Calu3 (cell line): ENCODE measurements at regions of chr12 and their contacts with region 1.

Region 1: GRCh38 chr12:121060149-121061001 is 21.3 kb upstream of the OASL start:
- DNase-seq: peak; percentile 49
- H3K4me3 Mint-ChIP-seq: peak overlapping the region; percentile 43
- H3K27ac Mint-ChIP-seq: peak overlapping the region; percentile 60
- H3K4me1 Mint-ChIP-seq: peaks cover 7% of the 10 kb centered on the region
- H3K27me3 Mint-ChIP-seq: no peaks in the 10 kb centered on the region
- CTCF ChIP-seq: peak; percentile 41

Region 2: GRCh38 chr12:121095544-121096198 is 35.3 kb after region 1 on chr12:
- CTCF ChIA-PET with region 1: no interaction called
- intact Hi-C with region 1: loop called (anchors 5 kb)
- DNase-seq: peak; percentile 85
- H3K4me3 Mint-ChIP-seq: peak overlapping the region; percentile 67
- H3K27ac Mint-ChIP-seq: peak overlapping the region; percentile 53
- H3K4me1 Mint-ChIP-seq: peaks cover 14% of the 10 kb centered on the region
- H3K27me3 Mint-ChIP-seq: peaks cover 47% of the 10 kb centered on the region
- CTCF ChIP-seq: peak; percentile 88

Region 3: DNA sequence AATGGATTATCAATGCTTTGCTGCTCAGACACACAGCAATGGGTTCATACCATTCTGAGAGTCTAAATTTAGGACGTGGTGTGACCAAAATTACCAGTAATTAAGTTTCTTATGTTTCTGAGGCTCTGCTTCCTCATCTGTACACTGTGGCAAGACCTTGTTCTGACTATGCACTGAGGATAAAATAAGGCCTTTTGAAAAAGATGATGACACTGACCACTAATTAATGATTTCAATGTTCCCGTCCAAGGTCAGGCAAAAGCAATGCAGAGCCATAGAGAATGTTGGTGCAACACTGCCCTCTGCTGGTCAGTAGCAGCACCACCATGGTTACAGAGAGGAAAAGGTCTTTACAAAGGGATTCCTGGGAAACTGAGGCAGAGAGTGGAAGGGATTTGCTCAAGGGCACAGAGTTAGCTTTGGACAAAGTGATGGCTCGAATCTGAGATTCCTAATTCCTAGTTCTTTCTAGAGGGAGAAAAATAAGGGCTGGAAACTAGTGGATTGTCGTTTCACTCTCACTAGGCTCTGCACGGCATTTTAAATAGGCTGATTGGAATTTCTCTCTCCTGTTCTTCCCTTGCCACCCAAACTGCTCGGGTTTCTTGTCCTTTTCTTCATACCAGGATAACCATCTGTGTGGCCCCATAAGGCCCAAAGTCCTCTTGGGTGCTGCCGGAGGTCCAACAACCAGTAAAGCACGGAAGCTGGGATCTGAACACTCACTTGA is 50.0 kb after region 1 on chr12:
- CTCF ChIA-PET with region 1: no interaction called
- intact Hi-C with region 1: loop called (anchors 5 kb)
- DNase-seq: peak; percentile 72
- H3K4me3 Mint-ChIP-seq: no peak overlapping the region
- H3K27ac Mint-ChIP-seq: peak overlapping the region; percentile 13
- H3K4me1 Mint-ChIP-seq: peaks cover 7% of the 10 kb centered on the region
- H3K27me3 Mint-ChIP-seq: no peaks in the 10 kb centered on the region
- CTCF ChIP-seq: peak; percentile 94

Region 4: DNA sequence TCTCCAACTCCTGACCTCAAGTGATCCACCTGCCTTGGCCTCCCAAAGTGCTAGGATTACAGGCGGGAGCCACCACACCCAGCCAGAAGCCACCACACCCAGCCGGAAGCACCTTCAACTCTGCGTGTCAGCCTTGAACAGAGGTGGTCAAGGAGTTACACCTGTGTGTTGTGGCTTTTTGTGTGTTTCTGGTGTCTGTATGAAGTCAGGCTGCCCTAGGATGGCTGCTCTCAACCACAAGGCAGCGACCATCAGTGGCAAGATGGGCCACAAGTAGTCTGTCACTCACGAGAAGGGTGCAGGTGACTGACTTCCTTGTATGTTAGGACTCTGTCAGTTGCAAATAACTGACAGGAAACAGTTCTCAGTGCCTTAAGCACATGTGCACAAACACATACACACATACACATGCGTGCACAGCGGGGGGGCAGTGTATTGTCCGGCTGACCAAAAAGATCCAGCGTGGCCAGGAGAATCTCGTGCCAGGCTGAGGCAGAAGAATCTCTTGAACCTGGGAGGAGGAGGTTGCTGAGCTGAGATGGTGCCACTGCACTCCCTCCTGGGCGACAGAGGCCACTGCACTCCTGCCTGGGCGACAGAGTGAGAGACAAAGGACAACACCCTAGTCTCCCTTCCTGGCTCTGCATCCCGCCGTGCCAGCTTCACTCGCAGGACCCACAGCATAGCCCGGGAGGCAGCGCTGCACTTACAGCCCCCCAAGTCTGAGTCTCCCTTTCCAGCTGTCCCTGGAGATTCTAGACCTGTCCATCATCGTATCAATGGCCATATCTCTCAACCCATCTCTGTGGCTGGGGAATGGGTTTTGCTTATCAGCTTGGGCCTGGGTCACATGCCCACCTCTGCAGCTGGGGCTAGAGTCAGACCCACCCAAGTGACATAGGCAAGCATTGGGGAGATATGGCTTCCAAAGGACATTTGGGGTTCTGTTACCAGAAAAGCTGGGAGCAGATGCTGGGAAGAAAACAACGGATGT is 163.2 kb after region 1 on chr12:
- CTCF ChIA-PET with region 1: no interaction called
- intact Hi-C with region 1: loop called (anchors 2 kb)
- DNase-seq: peak; percentile 40
- H3K4me3 Mint-ChIP-seq: no peak overlapping the region
- H3K27ac Mint-ChIP-seq: no peak overlapping the region
- H3K4me1 Mint-ChIP-seq: peaks cover 9% of the 10 kb centered on the region
- H3K27me3 Mint-ChIP-seq: no peaks in the 10 kb centered on the region
- CTCF ChIP-seq: peak; percentile 28